IMR-90 (cell line): ENCODE measurements at regions of chr2 and their contacts with region 1.

Region 1: DNA sequence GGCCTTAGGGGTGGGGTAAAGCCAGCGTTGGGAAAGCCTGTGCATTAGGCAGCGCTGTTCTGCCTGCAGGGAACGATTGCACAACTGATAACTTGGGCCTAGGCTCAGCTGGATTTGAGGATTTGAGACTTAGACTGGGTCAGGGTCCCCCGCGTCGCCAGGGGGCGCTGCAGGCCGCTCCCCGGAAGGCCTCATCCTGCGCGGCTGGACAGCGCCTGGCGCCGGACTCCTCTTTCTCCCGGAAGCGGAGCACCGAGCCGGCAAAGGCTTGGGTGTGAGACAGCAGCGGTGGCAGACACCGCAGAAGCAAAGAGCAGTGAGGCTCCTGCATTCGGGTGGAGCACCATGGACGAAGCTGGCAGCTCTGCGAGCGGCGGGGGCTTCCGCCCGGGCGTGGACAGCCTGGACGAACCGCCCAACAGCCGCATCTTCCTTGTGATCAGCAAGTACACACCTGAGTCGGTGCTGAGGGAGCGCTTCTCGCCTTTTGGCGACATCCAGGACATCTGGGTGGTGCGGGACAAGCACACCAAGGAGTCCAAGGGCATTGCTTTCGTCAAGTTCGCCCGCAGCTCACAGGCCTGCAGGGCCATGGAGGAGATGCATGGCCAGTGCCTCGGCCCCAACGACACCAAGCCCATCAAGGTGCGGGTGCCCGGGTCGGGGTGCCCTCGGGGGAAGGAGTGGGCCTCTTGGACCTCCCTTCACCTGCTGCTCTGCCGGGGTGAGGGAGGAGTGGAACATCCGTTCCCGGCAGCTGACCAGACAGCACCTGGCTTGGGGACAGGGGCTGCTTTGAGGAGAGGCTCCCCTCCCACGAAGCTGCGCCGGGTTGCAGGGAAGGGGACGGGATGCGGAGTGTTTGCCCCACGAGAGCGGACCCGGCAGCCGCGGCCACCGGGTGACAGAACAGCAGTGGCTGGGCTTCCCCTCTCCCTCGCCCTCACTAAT is at the start of gene RBM45:
- DNase-seq: peak; percentile 89
- ATAC-seq: peak; percentile 98
- H3K4me3 ChIP-seq: peak within 1 kb of the TSS; percentile 81
- H3K27ac ChIP-seq: peak within 1 kb of the TSS; percentile 24
- H3K4me1 ChIP-seq: peaks cover 1% of the 10 kb centered on the region
- H3K27me3 ChIP-seq: no peaks in the 10 kb centered on the region
- CTCF ChIP-seq: peak; percentile 99
- POLR2A ChIP-seq: peak; percentile 65; the same call in 1 of the 2 replicates
- RAD21 ChIP-seq: peak; percentile 75
- total RNA-seq, gene RBM45: 17.9 and 18.1 TPM in 2 replicates

Region 2: GRCh38 chr2:177572236-177572671 is 540.2 kb before region 1 on chr2:
- CTCF ChIA-PET with region 1: no interaction called
- POLR2A ChIA-PET with region 1: no interaction called
- dilution Hi-C with region 1: no loop called
- in situ Hi-C with region 1: no loop called
- intact Hi-C with region 1: no loop called
- DNase-seq: no peak
- ATAC-seq: no peak
- H3K4me3 ChIP-seq: no peak overlapping the region
- H3K27ac ChIP-seq: no peak overlapping the region
- H3K4me1 ChIP-seq: no peaks in the 10 kb centered on the region
- H3K27me3 ChIP-seq: peaks cover 7% of the 10 kb centered on the region
- CTCF ChIP-seq: no peak
- POLR2A ChIP-seq: no peak
- RAD21 ChIP-seq: no peak

Region 3: DNA sequence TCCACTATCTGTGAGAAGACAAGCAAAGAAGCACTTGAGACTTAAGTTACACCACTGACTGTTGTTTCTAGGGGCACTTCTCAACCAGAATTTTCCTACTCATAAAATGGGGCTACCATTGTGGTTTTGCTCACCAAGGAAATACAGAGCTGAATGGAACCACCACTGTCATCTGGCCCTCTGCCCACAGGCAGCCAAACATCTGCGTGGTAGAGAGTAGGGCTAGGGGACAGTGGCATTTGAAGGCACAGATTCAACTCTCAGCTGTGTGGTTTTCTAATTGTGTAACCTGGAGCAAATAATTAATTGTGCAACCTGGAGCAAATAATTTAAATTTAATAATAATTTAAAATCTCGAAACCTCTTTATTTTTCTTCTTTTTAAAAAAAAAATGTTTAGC is 119.5 kb before region 1 on chr2:
- CTCF ChIA-PET with region 1: interaction called, 11 read pairs
- POLR2A ChIA-PET with region 1: no interaction called
- dilution Hi-C with region 1: no loop called
- in situ Hi-C with region 1: no loop called
- intact Hi-C with region 1: no loop called
- DNase-seq: no peak
- ATAC-seq: no peak
- H3K4me3 ChIP-seq: no peak overlapping the region
- H3K27ac ChIP-seq: no peak overlapping the region
- H3K4me1 ChIP-seq: peaks cover 10% of the 10 kb centered on the region
- H3K27me3 ChIP-seq: no peaks in the 10 kb centered on the region
- CTCF ChIP-seq: no peak
- POLR2A ChIP-seq: no peak
- RAD21 ChIP-seq: no peak

Region 4: GRCh38 chr2:178057179-178057680 is 55.2 kb before region 1 on chr2:
- CTCF ChIA-PET with region 1: no interaction called
- POLR2A ChIA-PET with region 1: no interaction called
- dilution Hi-C with region 1: no loop called
- in situ Hi-C with region 1: no loop called
- intact Hi-C with region 1: no loop called
- DNase-seq: no peak
- ATAC-seq: no peak
- H3K4me3 ChIP-seq: no peak overlapping the region
- H3K27ac ChIP-seq: no peak overlapping the region
- H3K4me1 ChIP-seq: no peaks in the 10 kb centered on the region
- H3K27me3 ChIP-seq: no peaks in the 10 kb centered on the region
- CTCF ChIP-seq: no peak
- POLR2A ChIP-seq: no peak
- RAD21 ChIP-seq: no peak

Region 5: GRCh38 chr2:178193823-178194599 is 81.5 kb after region 1 on chr2 and contains the start of gene OSBPL6:
- CTCF ChIA-PET with region 1: no interaction called
- POLR2A ChIA-PET with region 1: no interaction called
- dilution Hi-C with region 1: no loop called
- in situ Hi-C with region 1: no loop called
- intact Hi-C with region 1: loop called (anchors 5 kb)
- DNase-seq: peak; percentile 82
- ATAC-seq: peak; percentile 92
- H3K4me3 ChIP-seq: peak within 1 kb of the TSS; percentile 90
- H3K27ac ChIP-seq: peak within 1 kb of the TSS; percentile 31; the same call in 1 of the 2 replicates
- H3K4me1 ChIP-seq: no peaks in the 10 kb centered on the region
- H3K27me3 ChIP-seq: no peaks in the 10 kb centered on the region
- CTCF ChIP-seq: peak; percentile 35
- POLR2A ChIP-seq: no peak
- RAD21 ChIP-seq: no peak; the same call in 1 of the 2 replicates
- total RNA-seq, gene OSBPL6: 2.8 and 3.2 TPM in 2 replicates

Region 6: DNA sequence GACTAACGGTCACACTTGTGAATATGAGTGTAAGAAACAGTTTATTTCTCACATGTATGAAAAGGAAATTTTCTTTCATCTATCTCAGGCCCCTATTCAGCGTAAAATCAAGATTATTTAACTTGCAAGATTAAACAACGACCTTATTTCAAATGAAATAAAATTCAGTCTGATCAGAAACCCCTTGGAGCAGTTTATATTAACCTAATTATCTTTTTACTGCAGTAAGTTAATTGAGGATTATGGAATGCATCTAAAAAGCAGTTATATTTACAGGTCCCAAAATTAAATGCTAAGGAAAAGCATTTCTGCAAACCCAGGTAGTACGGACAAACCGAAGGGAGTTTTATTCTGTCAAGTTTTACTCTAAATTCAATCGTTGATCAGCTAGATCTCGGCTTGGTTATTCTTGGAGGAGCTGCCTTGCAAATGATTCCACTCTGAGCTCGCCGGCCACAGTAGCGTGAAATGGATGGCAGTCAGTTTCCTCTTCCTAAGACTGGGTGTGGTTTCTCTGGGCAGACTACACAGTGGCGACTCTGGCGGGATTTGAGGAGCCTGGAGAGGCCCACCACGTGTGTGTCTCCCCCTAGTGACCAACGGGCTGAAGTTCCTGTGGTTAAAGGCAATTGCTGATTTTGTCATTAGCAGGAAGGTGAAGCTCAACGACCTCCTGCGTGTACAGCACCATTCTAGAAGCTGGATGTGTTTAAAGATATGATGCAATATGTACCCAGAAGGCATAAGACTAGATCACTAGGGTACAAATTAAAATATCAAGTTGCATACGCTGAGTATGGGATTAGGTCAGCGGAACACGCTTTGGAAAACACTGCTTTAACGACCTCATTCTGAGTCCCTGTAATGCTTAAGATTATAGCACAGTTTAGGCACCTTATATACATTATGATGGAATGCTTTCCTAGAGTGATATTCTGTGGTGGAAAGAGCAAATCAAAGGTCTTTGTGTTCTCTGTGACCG is 302.1 kb after region 1 on chr2:
- CTCF ChIA-PET with region 1: interaction called, 18 read pairs
- POLR2A ChIA-PET with region 1: no interaction called
- dilution Hi-C with region 1: no loop called
- in situ Hi-C with region 1: no loop called
- intact Hi-C with region 1: loop called (anchors 1 kb)
- DNase-seq: peak; percentile 94
- ATAC-seq: peak; percentile 87
- H3K4me3 ChIP-seq: peak overlapping the region; percentile 65
- H3K27ac ChIP-seq: no peak overlapping the region
- H3K4me1 ChIP-seq: 0 out of 2 replicates have a peak, but pooled peaks cover 2% of the 10 kb centered on the region
- H3K27me3 ChIP-seq: no peaks in the 10 kb centered on the region
- CTCF ChIP-seq: peak; percentile 95
- POLR2A ChIP-seq: no peak; the same call in 1 of the 2 replicates
- RAD21 ChIP-seq: peak; percentile 85

Region 7: GRCh38 chr2:178914259-178914849 is 801.9 kb after region 1 on chr2:
- CTCF ChIA-PET with region 1: no interaction called
- POLR2A ChIA-PET with region 1: no interaction called
- dilution Hi-C with region 1: no loop called
- in situ Hi-C with region 1: no loop called
- intact Hi-C with region 1: loop called (anchors 10 kb)
- DNase-seq: peak; percentile 79
- ATAC-seq: peak; percentile 96
- H3K4me3 ChIP-seq: no peak overlapping the region
- H3K27ac ChIP-seq: no peak overlapping the region
- H3K4me1 ChIP-seq: no peaks in the 10 kb centered on the region
- H3K27me3 ChIP-seq: peaks cover 2% of the 10 kb centered on the region
- CTCF ChIP-seq: peak; percentile 75
- POLR2A ChIP-seq: no peak
- RAD21 ChIP-seq: peak; percentile 65